IMR-90 (cell line): ENCODE measurements at regions of chr9 and their contacts with region 1.

Region 1: GRCh38 chr9:6305954-6306563 is 22.1 kb upstream of the TPD52L3 start:
- DNase-seq: peak; percentile 50
- ATAC-seq: peak; percentile 78
- H3K4me3 ChIP-seq: no peak overlapping the region
- H3K27ac ChIP-seq: no peak overlapping the region
- H3K4me1 ChIP-seq: no peaks in the 10 kb centered on the region
- H3K27me3 ChIP-seq: peaks cover 2% of the 10 kb centered on the region; the same call in 1 of the 2 replicates
- CTCF ChIP-seq: peak; percentile 61
- POLR2A ChIP-seq: no peak
- RAD21 ChIP-seq: peak; percentile 69

Region 2: DNA sequence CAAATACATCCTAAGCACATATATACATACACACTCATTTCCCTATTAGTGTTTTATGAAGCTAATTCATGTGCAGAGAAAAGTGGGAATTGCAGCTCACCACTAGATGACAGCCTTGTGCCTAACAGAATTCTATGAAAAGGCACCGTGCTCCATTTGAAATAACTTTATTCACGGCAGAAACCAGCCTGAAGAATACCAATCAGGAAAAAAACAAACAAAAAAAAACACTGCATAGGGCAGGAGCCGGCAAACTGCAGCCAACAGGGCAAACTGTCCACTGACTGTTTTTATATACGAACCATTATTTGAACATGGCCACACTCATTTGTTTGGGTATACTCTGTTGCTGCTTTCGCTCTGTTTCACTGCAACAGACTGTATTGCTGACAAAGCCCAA is 506.7 kb before region 1 on chr9:
- CTCF ChIA-PET with region 1: no interaction called
- POLR2A ChIA-PET with region 1: no interaction called
- dilution Hi-C with region 1: no loop called
- in situ Hi-C with region 1: no loop called
- intact Hi-C with region 1: loop called (anchors 10 kb)
- DNase-seq: peak; percentile 59
- ATAC-seq: peak; percentile 75
- H3K4me3 ChIP-seq: 0 out of 2 replicates have a peak overlapping the region, but pooled peaks have one; percentile 19
- H3K27ac ChIP-seq: no peak overlapping the region
- H3K4me1 ChIP-seq: no peaks in the 10 kb centered on the region
- H3K27me3 ChIP-seq: no peaks in the 10 kb centered on the region
- CTCF ChIP-seq: peak; percentile 78
- POLR2A ChIP-seq: no peak
- RAD21 ChIP-seq: peak; percentile 72

Region 3: GRCh38 chr9:5886114-5886939 is 419.7 kb before region 1 on chr9:
- CTCF ChIA-PET with region 1: interaction called, 3 read pairs
- POLR2A ChIA-PET with region 1: no interaction called
- dilution Hi-C with region 1: no loop called
- in situ Hi-C with region 1: loop called (anchors 10 kb)
- intact Hi-C with region 1: loop called (anchors 2 kb)
- DNase-seq: peak; percentile 65
- ATAC-seq: peak; percentile 99
- H3K4me3 ChIP-seq: no peak overlapping the region
- H3K27ac ChIP-seq: no peak overlapping the region
- H3K4me1 ChIP-seq: no peaks in the 10 kb centered on the region
- H3K27me3 ChIP-seq: peaks cover 11% of the 10 kb centered on the region
- CTCF ChIP-seq: peak; percentile 93
- POLR2A ChIP-seq: 0 out of 2 replicates have a peak, but pooled peaks have one; percentile 33
- RAD21 ChIP-seq: peak; percentile 90

Region 4: DNA sequence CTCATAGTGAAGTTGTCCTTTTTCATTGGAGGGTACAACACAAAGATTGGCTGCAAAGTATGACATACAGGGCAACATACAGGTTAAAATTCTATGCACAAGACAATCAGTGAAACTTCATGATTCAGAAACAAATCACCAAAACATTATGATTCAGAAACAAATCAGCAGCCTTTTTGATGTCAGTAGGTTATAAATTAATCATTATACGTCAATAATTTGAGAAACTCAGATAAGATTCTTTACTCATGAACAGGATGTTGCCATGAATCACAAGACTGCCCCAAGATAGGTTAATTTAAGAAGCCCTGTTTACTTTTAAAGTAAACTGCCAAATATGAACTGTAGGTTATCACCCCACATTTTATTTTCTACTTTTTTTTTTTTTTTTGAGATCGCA is 152.6 kb before region 1 on chr9:
- CTCF ChIA-PET with region 1: no interaction called
- POLR2A ChIA-PET with region 1: no interaction called
- dilution Hi-C with region 1: no loop called
- in situ Hi-C with region 1: no loop called
- intact Hi-C with region 1: no loop called
- DNase-seq: peak; percentile 20
- ATAC-seq: no peak
- H3K4me3 ChIP-seq: no peak overlapping the region
- H3K27ac ChIP-seq: no peak overlapping the region
- H3K4me1 ChIP-seq: no peaks in the 10 kb centered on the region
- H3K27me3 ChIP-seq: no peaks in the 10 kb centered on the region
- CTCF ChIP-seq: no peak
- POLR2A ChIP-seq: no peak
- RAD21 ChIP-seq: no peak

Region 5: DNA sequence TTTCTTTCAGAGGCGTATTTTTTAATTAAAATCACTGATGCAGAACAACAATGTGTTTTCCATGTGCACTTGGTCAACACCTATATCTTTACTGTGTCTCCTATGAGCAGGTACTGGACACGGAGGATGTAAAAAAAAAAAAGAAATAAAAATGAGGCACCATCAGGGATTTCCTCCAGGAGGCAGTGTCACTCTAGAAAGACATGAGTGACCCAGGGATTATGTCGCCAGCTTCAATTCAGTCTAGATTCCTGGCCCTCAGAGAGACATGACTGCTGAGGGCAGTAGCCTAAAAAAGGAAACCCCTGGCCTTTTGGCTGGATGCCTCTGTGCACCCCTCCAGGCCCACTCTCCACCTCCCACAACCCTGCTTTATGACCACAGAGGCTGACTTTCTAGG is 108.7 kb before region 1 on chr9:
- CTCF ChIA-PET with region 1: interaction called, 6 read pairs
- POLR2A ChIA-PET with region 1: no interaction called
- dilution Hi-C with region 1: no loop called
- in situ Hi-C with region 1: no loop called
- intact Hi-C with region 1: loop called (anchors 1 kb)
- DNase-seq: peak; percentile 5
- ATAC-seq: no peak
- H3K4me3 ChIP-seq: no peak overlapping the region
- H3K27ac ChIP-seq: no peak overlapping the region
- H3K4me1 ChIP-seq: no peaks in the 10 kb centered on the region
- H3K27me3 ChIP-seq: peaks cover 7% of the 10 kb centered on the region; the same call in 1 of the 2 replicates
- CTCF ChIP-seq: peak; percentile 38
- POLR2A ChIP-seq: no peak
- RAD21 ChIP-seq: peak; percentile 40; the same call in 1 of the 2 replicates

Region 6: GRCh38 chr9:6449645-6450044 is 143.6 kb after region 1 on chr9:
- CTCF ChIA-PET with region 1: no interaction called
- POLR2A ChIA-PET with region 1: no interaction called
- dilution Hi-C with region 1: no loop called
- in situ Hi-C with region 1: no loop called
- intact Hi-C with region 1: no loop called
- DNase-seq: no peak
- ATAC-seq: no peak
- H3K4me3 ChIP-seq: no peak overlapping the region
- H3K27ac ChIP-seq: no peak overlapping the region
- H3K4me1 ChIP-seq: peaks cover 2% of the 10 kb centered on the region
- H3K27me3 ChIP-seq: no peaks in the 10 kb centered on the region
- CTCF ChIP-seq: no peak
- POLR2A ChIP-seq: no peak
- RAD21 ChIP-seq: no peak